ENCODE measurements at regions of chr1 and their contacts with region 1.

Region 1: DNA sequence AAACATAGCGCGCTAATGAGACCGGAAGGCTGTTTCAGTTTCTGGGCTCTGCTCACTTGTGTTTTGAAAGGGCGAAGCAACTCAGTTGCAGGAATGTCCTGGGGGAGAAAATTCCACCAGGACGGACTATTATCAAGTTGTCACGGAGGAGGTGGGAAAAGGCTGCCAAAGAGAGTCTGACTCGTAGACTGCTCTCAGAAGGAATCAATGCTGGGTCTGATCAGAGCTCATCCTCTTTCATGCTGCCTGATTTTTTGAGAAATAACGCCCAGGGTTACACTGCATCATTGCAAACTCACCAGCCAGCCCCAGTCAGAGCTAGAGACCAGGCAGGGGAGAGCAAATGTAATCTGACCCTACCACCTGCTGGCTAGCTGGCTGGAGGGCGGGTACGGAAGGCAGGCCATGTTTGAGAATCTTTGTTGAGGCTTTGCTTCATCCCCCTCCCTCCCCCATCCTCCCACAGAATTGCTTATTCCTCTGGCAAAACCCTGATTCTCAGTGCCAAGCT is 36.4 kb upstream of the BCL9 start:
- DNase-seq: peak; percentile 37
- ATAC-seq: peak; percentile 64 to 88

Region 2: DNA sequence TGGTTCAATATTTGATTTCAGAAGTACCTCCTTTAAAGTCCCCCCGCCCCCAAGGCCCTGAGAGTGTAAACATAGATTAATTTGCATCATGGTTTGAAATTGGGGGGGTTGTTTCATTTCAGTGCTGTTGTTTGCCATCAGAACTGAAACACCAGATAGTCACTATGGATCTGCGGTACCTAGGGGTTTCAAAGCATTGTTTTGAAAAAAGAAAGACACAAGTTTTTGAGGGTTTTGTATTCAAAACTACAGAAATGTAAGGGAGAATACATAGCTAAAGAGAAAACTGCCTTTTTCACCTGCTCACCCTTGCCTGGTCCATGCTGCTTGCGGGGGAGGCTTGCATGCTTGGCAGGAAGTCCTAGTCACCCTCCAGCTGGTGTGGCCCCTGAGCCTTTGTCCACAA is 106.2 kb after region 1 on chr1:
- intact Hi-C with region 1: loop called in 1 of 2 experiments (anchors 5 kb)
- DNase-seq: no peak
- ATAC-seq: no peak